ENCODE measurements at regions of chr11 and their contacts with region 1.

Region 1: GRCh38 chr11:32960553-32961164 is 55.0 kb upstream of the DEPDC7 start:
- DNase-seq: no peak

Region 2: DNA sequence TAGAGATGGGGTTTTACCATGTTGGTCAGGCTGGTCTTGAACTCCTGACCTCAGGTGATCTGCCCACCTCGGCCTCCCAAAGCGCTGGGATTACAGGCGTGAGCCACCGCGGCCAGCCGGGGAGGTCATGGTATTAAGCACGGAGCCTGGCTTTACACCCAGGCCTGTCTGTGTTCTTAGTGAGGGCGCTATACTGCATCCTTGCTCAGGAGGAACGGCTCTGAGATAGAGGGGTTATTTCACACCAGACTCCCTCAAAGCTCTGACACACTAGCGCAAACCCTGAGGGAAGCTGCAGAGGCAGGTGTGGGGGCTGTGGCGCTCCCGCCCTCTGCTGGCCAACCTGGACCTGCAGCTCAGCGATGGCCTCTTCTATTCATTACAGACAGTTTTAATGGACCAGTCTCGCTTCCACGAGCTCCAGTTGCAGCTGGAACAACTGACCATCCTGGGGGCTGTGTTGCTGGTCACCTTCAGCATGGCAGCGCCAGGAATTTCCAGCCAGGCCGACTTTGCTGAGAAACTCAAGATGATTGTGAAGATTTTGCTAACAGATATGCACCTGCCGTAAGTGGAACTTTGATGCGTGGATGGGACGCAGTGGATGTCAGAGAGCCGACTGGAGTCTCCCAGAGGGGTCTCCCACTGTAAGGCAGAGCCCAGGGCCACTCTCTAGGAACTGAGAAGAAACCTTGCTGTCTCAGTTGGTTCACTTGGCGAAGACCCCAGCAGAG is 105.0 kb after region 1 on chr11:
- intact Hi-C with region 1: loop called (anchors 1 kb)
- DNase-seq: peak; percentile 31 to 96 (median 68)

Region 3: DNA sequence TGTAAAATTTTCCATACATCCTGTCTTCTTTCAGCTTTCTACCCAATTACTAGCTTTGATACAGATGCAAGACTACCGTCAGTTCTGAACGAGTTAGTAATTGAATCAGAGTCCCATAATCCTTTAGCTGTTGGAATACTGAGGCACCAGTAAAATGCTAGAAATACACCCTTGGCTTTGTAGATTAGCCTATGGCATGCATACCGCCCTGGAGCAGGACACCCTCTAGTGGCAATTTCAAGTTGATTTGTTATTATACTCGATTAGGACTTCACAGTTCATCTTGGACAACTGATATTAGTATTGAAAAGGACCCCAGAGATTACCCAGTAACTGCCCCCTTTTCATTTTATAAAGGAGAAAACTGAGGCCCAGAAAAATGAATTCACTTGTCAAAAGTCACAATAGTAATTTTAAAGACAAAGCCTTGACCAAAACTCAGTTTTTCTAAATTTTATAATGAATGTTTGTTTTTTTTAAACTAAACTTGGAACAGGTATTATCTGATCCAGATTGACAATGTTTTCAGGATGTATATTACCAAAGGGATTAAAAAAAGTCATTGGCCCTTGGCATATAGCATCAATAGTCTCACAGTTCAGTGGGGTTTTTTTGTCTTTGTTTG is 369.2 kb after region 1 on chr11:
- intact Hi-C with region 1: loop called (anchors 10 kb)
- DNase-seq: peak in 6 of 10 donors; percentile 15 to 87 (median 40)

Region 4: DNA sequence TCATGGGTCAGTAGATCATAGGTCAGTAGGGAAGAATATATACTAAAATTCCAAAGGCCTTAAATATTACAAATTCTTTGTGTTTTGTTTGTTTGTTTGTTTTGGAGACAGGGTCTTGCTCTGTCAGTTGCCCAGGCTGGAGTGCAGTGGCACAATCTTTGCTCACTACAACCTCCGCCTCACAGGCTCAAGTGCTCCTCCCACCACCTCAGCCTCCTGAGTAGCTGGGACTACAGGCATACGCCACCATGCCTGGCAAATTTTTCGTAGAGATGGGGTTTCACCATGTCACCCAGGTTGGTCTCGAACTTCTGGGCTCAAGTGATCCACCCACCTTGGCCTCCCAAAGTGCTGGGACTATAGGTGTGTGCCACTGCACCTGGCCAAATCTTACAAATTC is 379.3 kb after region 1 on chr11:
- intact Hi-C with region 1: no loop called
- DNase-seq: no peak